ENCODE measurements at regions of chr4 and their contacts with region 1.

Region 1: DNA sequence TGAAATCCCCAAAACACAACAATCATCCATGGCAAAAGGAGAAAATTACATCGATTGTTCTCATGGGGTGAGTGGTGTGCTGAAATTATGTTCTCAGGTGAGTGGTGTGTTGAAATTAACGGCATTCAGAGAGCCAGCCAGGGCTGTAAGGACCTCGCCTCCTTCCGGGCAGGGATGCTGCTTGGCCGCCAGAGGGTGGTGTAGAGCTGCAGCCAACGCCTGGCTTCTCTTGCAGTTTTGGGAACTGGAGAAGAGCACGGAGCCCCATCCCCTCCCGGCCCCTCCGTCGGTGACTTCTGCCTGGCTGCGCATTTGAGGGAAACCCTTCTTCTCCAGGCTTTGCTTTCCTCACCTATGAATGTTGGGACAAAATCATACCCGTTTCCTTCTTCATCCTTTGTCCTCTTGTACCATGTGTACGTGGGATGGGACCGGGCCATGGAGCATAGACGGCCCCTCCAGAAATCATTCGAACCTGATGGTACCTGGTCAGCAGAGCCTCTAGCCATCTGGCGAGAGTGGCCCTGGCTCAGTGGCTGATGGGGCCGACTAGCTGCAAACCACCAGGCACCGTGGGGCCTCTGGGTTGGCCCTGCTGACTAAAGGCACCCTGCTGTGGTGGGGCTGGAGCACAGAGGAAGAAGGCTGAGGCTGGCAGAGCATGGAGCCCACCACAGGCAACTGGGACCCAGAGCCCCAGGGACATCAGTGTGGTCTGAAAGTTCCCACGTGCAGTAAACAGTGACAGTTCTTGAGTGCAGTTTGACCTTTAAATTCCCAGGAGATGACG is 28.4 kb downstream of the TRMT44 start:
- DNase-seq: peak; percentile 62 to 73
- H3K4me3 ChIP-seq: no peak overlapping the region
- H3K27ac ChIP-seq: no peak overlapping the region
- H3K4me1 ChIP-seq: peaks cover 3 to 4% of the 10 kb centered on the region in 2 donors
- H3K27me3 ChIP-seq: no peaks in the 10 kb centered on the region
- CTCF ChIP-seq: peak; percentile 72 to 92 (median 87)
- POLR2A ChIP-seq: no peak

Region 2: DNA sequence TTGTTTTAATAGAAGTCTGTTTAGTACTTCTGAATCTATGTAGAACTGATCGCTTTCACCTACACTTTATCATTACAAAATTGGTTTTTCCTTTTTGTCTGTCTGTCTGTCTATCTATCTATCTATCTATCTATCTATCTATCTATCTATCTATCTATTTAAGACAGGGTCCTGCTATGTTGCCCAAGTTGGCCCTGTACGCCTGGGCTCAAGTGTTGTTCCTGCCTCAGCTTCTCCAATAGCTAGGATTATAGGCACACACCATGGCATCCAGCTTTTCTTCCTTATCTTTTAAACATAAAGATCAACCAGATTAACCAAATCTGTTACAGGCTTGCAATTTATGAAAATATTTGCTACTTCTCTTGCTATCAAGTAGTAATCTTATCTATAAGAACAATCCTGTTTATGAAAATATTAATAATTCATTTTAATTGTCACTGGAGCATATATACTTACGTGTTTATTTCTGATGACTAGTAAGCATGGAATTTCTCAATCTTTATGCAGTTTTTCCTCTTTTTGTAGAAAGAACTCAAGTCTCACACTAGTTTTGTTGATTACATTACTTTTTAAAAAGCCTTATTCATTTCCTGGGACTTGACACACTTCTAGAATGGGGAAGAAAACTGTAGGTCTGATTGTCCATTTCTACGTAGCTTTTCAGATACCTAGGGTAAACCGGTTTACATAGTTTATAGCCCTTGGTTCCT is 1661.9 kb before region 1 on chr4:
- intact Hi-C with region 1: loop called (anchors 10 kb)
- DNase-seq: no peak
- H3K4me3 ChIP-seq: no peak overlapping the region
- H3K27ac ChIP-seq: no peak overlapping the region
- H3K4me1 ChIP-seq: no peaks in the 10 kb centered on the region
- H3K27me3 ChIP-seq: no peaks in the 10 kb centered on the region
- CTCF ChIP-seq: no peak
- POLR2A ChIP-seq: no peak

Region 3: GRCh38 chr4:8215001-8215427 is 253.9 kb before region 1 on chr4:
- intact Hi-C with region 1: no loop called
- DNase-seq: no peak
- H3K4me3 ChIP-seq: no peak overlapping the region
- H3K27ac ChIP-seq: peak overlapping the region in 1 of 2 donors; percentile 5
- H3K4me1 ChIP-seq: no peaks in the 10 kb centered on the region
- H3K27me3 ChIP-seq: no peaks in the 10 kb centered on the region
- CTCF ChIP-seq: no peak
- POLR2A ChIP-seq: no peak

Region 4: GRCh38 chr4:8586671-8587455 is 117.9 kb after region 1 on chr4:
- intact Hi-C with region 1: loop called (anchors 5 kb)
- DNase-seq: no peak
- H3K4me3 ChIP-seq: no peak overlapping the region
- H3K27ac ChIP-seq: no peak overlapping the region
- H3K4me1 ChIP-seq: no peaks in the 10 kb centered on the region
- H3K27me3 ChIP-seq: peaks cover 0 to 26% of the 10 kb centered on the region in 2 donors
- CTCF ChIP-seq: no peak
- POLR2A ChIP-seq: no peak